AG04449 (cell line): ENCODE measurements at regions of chr1 and their contacts with region 1.

Region 1: DNA sequence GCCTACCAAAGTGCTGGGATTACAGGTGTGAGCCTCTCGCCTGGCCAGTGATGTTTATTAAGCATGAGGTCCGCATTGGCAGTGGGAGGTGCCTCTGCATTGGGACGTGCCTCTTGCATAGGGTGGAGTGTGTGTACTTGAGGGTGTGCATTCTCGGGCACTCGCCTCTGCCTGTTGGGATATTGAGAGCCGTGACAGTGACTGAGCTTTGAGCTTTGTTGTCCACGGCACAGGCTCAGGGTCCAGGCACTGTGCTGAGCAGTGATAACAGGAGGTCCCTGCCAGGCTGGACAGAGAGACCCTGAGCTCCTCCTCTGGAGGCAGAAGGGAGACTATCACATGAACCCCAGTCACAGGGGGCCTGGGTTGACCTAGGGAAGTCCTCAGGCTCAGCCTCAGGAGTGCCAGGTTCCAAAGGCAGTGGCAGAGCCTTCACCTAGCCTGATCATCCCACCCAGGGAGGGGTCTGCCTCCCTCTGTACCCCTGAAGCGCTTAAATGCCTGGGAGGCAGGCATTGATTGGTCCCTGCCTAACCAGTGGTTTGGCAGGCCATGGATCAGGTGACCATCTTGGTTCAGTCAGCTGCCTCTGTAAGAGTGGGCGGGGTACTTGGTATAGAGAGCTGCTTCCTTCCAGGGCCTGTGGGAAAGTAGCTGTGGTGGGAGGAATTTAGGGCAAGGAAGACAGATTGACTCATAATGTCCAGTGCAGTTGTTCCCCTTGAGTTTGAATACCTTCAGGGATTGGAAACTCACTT is 213.8 kb upstream of the TMEM51 start:
- DNase-seq: peak; percentile 52
- H3K4me3 ChIP-seq: no peak overlapping the region
- CTCF ChIP-seq: no peak

Region 2: DNA sequence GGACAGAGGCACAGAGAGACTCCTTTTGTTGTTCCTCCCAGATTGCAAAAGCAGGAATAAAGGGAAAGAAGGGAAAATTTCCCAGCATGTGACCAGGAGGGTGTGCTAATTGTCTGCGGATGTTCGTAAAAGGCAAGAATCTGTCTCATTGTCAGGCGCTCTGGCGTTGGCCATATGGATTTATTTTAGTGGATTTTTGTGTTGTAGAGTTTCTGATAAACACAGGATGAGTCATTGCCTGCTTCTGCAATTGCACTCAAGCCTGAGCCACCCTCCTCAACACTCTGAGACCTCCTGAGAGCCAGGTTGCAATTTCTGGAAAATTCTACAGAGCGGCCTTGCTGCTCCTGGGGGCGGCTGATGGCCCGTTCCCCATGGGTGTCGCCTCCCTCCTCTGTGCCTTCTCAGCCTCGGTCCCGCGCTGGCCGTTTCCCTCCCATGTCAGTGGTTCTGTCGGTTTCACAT is 113.5 kb before region 1 on chr1:
- CTCF ChIA-PET with region 1: no interaction called
- POLR2A ChIA-PET with region 1: no interaction called
- DNase-seq: peak; percentile 3
- H3K4me3 ChIP-seq: no peak overlapping the region
- CTCF ChIP-seq: no peak

Region 3: DNA sequence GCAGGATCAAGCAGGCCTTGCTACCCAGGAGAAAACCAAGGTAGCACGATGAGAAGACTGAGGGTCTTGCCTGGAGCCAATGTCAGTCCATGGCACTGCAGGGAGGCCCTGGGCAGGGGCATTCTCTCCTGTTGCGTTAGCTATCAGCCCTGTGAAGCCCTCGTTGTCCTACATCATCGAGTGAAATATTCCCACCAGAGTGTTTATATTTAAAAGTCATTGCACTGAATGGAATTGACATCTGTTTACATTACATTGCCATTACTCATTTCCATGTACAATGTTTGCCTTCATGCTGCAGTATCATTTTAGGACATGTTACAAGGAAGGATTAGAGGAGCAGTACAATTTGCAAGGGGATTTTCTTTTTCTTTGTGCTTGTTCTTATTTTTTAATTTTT is 97.3 kb before region 1 on chr1:
- CTCF ChIA-PET with region 1: no interaction called
- POLR2A ChIA-PET with region 1: no interaction called
- DNase-seq: no peak
- H3K4me3 ChIP-seq: no peak overlapping the region
- CTCF ChIP-seq: no peak

Region 4: GRCh38 chr1:14929547-14930246 is 10.0 kb before region 1 on chr1:
- CTCF ChIA-PET with region 1: interaction called, 11 read pairs
- POLR2A ChIA-PET with region 1: interaction called, 3 read pairs
- DNase-seq: no peak
- H3K4me3 ChIP-seq: no peak overlapping the region
- CTCF ChIP-seq: no peak

Region 5: DNA sequence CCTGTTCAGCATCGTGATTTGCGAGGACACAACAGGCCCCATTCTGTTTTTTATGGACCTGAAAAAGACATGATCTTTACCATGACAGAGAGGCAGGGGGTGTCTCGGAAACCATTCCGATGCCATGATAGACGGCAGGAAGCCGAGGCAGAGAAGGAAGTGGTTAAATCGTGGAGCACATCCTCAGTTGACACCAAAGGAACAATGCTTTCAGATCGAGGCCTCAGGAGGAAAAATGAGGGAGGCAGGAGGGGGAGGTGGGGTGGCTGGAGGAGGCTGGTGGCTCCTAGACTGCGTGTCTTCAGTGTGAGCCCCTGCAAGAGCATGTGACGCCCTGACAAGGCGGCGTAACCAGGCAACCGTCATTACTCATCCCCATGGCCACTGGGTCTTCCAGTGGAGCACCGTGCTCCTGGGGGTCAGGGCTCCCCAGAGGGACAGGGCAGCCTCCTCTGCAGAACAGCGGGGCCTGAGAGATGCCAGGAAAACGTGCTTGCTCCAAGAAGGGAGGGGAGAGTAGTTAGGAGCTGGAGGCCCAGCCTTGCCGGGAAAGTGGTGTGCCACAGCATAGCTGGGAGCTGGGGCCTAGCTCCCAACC is 41.0 kb after region 1 on chr1:
- CTCF ChIA-PET with region 1: no interaction called
- POLR2A ChIA-PET with region 1: no interaction called
- DNase-seq: no peak
- H3K4me3 ChIP-seq: no peak overlapping the region
- CTCF ChIP-seq: no peak

Region 6: GRCh38 chr1:15218287-15219279 is 278.9 kb after region 1 on chr1:
- CTCF ChIA-PET with region 1: no interaction called
- POLR2A ChIA-PET with region 1: no interaction called
- DNase-seq: no peak
- H3K4me3 ChIP-seq: no peak overlapping the region
- CTCF ChIP-seq: no peak